ENCODE measurements at regions of chr11 and their contacts with region 1.

Region 1: GRCh38 chr11:50333861-50334260 is 301.2 kb downstream of the OR4C45 start:
- DNase-seq: no peak
- CTCF ChIP-seq: no peak

Region 2: GRCh38 chr11:50102916-50103315 is 230.9 kb before region 1 on chr11:
- in situ Hi-C with region 1: loop called (anchors 25 kb)
- DNase-seq: no peak
- CTCF ChIP-seq: no peak

Region 3: DNA sequence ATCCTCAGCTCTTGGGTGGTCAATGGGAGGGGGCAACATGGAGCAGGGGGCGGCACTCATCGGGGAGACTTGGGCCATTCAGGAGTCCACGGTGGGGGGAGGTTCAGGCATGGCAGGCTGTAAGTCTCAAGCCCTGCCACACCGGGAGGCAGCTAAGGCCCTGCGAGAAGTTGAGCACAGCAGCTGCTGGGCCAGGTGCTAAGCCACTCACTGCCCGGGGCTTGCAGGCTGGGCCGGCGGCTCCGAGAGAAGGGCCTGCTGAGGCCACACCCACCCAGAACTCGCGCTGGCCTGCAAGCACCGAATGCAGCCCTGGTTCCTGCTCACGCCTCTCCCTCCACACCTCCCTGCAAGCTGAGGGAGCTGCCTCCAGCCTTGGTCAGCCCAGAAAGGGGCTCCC is 169.8 kb before region 1 on chr11:
- in situ Hi-C with region 1: no loop called
- DNase-seq: no peak
- CTCF ChIP-seq: no peak